ENCODE measurements at regions of chr5 and their contacts with region 1.

Region 1: GRCh38 chr5:142280066-142280911 is 44.5 kb downstream of the SPRY4 start:
- DNase-seq: peak; percentile 79 to 88
- ATAC-seq: peak; percentile 88 to 93 (median 92)
- H3K4me3 ChIP-seq: no peak overlapping the region
- H3K27ac ChIP-seq: peak overlapping the region; percentile 62 to 89 (median 76)
- H3K4me1 ChIP-seq: peaks cover 6 to 39% (median 27%) of the 10 kb centered on the region in 9 donors
- H3K27me3 ChIP-seq: no peaks in the 10 kb centered on the region
- CTCF ChIP-seq: no peak

Region 2: GRCh38 chr5:142215915-142216681 is 64.2 kb before region 1 on chr5:
- intact Hi-C with region 1: loop called in 1 of 10 experiments (anchors 5 kb)
- DNase-seq: peak; percentile 55 to 70
- ATAC-seq: peak; percentile 84 to 93 (median 88)
- H3K4me3 ChIP-seq: no peak overlapping the region
- H3K27ac ChIP-seq: peak overlapping the region; percentile 3 to 66 (median 44)
- H3K4me1 ChIP-seq: peaks cover 0 to 28% (median 17%) of the 10 kb centered on the region in 9 donors
- H3K27me3 ChIP-seq: no peaks in the 10 kb centered on the region
- CTCF ChIP-seq: no peak

Measured in heart right ventricle (tissue), 16 donors.